ENCODE measurements at regions of chr18 and their contacts with region 1.

Region 1: DNA sequence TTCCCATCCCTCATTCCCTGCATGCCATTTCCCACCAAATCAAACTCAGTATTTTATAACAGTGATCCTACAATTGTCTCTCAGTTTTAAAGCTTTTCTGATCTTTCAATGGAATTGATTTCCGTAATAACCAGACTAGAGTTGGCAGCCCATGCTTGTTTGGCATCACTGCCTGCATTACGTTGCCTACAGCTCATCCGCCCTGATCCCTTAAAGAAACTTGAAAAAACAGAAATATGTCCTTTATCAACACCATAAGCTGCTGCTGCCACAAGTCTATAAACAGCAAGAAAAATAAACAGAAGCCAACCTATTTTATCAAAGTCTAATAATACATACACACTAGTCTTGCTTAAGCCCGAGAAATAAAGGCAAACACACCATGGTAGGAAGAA is 331.0 kb downstream of the METTL4 start:
- DNase-seq: no peak
- H3K4me3 ChIP-seq: no peak overlapping the region
- H3K27ac ChIP-seq: no peak overlapping the region
- H3K4me1 ChIP-seq: peaks cover 13% of the 10 kb centered on the region
- H3K27me3 ChIP-seq: no peaks in the 10 kb centered on the region
- CTCF ChIP-seq: no peak

Region 2: DNA sequence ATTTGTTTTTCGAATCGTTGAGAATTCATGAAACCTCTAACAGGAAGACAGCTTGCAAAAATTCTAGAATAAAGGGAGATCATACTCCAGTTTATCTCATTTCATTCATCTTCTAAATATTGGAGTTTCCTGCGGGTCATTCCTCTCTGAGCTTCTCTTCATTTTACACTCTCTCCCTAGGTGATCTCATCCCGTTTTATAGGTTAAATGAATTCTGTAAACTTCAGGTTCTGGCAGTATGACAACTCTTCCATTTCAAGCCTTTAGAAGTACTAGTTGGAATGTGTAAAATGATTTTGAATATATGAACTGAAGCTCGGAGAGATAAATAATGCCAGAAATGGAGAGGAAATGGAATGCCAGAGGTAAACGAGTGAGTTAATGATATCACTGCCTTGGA is 18.6 kb after region 1 on chr18:
- CTCF ChIA-PET with region 1: no interaction called
- dilution Hi-C with region 1: no loop called
- in situ Hi-C with region 1: no loop called
- intact Hi-C with region 1: loop called (anchors 2 kb)
- DNase-seq: no peak
- H3K4me3 ChIP-seq: no peak overlapping the region
- H3K27ac ChIP-seq: no peak overlapping the region
- H3K4me1 ChIP-seq: no peaks in the 10 kb centered on the region
- H3K27me3 ChIP-seq: no peaks in the 10 kb centered on the region
- CTCF ChIP-seq: no peak

Region 3: DNA sequence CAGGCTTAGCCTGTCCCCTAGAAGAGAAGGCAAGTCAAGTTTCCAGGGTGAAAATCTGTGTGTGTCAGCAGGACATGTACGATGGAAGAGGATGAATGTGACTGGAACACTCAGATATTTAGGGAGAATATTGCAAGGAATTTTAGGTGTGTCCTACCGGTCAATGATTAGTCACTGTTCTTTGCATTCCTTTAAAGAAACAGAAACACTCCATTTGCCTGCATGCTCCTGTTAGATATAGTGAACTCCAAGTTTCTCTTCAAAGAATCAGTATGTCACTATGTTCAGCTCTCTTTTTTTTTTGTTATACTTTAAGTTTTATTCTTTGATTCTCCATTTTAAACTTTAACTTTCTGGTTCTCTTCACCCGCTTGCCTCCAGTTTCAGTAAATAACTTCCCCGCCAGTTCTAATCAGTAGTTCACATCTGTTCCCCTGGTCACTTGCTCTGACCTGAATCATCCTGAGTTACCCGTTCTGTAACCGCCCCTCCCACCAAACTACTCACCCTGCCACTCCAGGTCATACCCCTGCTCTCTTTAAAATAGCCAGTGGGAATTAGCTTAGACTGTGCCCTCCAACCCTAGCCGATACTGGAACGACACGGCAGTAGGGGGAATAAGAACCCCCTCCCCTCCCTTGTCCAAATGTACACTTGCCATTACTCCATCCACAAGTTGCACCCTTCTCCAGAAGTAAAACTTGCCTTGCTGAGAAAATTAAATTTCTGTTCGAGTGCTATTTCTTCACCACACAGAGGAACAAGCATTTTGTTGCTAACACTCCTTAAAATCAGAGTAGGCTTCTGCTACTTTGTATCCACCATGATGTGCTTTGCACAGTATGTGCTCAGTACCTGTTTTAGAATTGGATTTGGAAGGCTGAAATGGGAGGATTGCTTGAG is 62.6 kb after region 1 on chr18:
- CTCF ChIA-PET with region 1: no interaction called
- dilution Hi-C with region 1: no loop called
- in situ Hi-C with region 1: no loop called
- intact Hi-C with region 1: loop called (anchors 1 kb)
- DNase-seq: peak; percentile 76
- H3K4me3 ChIP-seq: peak overlapping the region in 1 of 3 experiments; percentile 12
- H3K27ac ChIP-seq: peak overlapping the region; percentile 89
- H3K4me1 ChIP-seq: peaks cover 31% of the 10 kb centered on the region
- H3K27me3 ChIP-seq: no peaks in the 10 kb centered on the region
- CTCF ChIP-seq: no peak

Measured in mammary epithelial cell (primary cell).